ENCODE measurements at regions of chr6 and their contacts with region 1.

Region 1: DNA sequence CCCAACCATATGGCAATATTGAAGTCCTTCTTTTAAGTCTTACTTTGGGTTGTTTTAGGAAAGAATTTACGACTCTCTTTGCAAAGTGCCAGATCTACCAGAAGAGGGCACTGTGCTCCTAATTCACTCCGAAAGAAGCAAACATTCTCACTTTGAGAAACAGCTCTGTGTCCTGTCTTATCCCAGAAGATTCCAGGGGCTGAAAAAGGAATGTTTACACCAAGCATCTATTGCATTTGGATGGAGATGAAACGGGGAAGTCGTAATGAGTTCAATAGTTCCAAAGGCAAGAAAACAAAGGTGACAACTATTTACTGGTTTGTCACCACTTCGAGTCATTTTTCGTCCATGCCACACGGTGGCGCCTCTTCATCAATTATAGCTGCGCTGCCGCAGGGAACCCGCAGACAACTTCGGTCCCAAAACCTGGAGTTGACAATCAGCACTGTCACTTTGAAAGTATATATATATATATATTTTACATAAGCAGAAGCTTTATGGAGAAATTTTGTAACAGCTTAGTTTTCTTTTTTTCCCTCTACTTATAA is 121.6 kb downstream of the MOXD1 start:
- DNase-seq: peak; percentile 43 to 83 (median 60)
- ATAC-seq: peak; percentile 87
- H3K4me3 ChIP-seq: peak overlapping the region; percentile 47
- H3K4me3 Mint-ChIP-seq: peak overlapping the region; percentile 80
- H3K27ac ChIP-seq: no peak overlapping the region
- H3K27ac Mint-ChIP-seq: no peak overlapping the region
- H3K4me1 ChIP-seq: no peaks in the 10 kb centered on the region
- H3K4me1 Mint-ChIP-seq: no peaks in the 10 kb centered on the region
- H3K27me3 ChIP-seq: peaks cover 3 to 20% of the 10 kb centered on the region in 2 experiments
- H3K27me3 Mint-ChIP-seq: peaks cover 32% of the 10 kb centered on the region
- CTCF ChIP-seq: peak; percentile 100

Region 2: GRCh38 chr6:132259070-132259469 is 20.6 kb before region 1 on chr6:
- CTCF ChIA-PET with region 1: interaction called, 10 read pairs
- POLR2A ChIA-PET with region 1: interaction called, 3 read pairs
- intact Hi-C with region 1: no loop called
- DNase-seq: no peak
- ATAC-seq: no peak
- H3K4me3 ChIP-seq: no peak overlapping the region
- H3K4me3 Mint-ChIP-seq: no peak overlapping the region
- H3K27ac ChIP-seq: no peak overlapping the region
- H3K27ac Mint-ChIP-seq: no peak overlapping the region
- H3K4me1 ChIP-seq: no peaks in the 10 kb centered on the region
- H3K4me1 Mint-ChIP-seq: no peaks in the 10 kb centered on the region
- H3K27me3 ChIP-seq: peaks cover 2 to 15% of the 10 kb centered on the region in 2 experiments
- H3K27me3 Mint-ChIP-seq: peaks cover 34% of the 10 kb centered on the region
- CTCF ChIP-seq: no peak

Region 3: DNA sequence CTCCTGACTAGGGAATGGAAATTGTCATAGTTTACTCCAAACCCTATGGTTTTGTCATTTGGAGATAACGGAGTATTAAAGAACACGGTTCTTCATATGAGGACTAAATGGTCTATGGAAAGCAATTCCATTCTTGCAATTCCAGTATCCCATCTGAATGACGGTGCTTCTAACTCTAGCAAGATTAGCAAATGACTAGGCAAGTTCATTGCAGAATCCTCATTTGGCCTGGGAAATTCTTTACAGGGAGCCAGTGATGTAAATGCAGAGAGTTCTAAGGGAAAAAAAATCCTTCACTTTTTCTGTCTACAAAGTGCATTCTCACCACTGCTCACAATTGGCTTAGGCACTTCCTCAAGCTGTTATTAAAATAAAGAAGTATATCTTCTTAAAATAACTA is 10.1 kb after region 1 on chr6:
- CTCF ChIA-PET with region 1: interaction called, 33 read pairs
- POLR2A ChIA-PET with region 1: no interaction called
- intact Hi-C with region 1: no loop called
- DNase-seq: no peak
- ATAC-seq: no peak
- H3K4me3 ChIP-seq: no peak overlapping the region
- H3K4me3 Mint-ChIP-seq: no peak overlapping the region
- H3K27ac ChIP-seq: no peak overlapping the region
- H3K27ac Mint-ChIP-seq: no peak overlapping the region
- H3K4me1 ChIP-seq: no peaks in the 10 kb centered on the region
- H3K4me1 Mint-ChIP-seq: no peaks in the 10 kb centered on the region
- H3K27me3 ChIP-seq: peaks cover 0 to 3% of the 10 kb centered on the region in 2 experiments
- H3K27me3 Mint-ChIP-seq: peaks cover 8% of the 10 kb centered on the region
- CTCF ChIP-seq: no peak

Region 4: DNA sequence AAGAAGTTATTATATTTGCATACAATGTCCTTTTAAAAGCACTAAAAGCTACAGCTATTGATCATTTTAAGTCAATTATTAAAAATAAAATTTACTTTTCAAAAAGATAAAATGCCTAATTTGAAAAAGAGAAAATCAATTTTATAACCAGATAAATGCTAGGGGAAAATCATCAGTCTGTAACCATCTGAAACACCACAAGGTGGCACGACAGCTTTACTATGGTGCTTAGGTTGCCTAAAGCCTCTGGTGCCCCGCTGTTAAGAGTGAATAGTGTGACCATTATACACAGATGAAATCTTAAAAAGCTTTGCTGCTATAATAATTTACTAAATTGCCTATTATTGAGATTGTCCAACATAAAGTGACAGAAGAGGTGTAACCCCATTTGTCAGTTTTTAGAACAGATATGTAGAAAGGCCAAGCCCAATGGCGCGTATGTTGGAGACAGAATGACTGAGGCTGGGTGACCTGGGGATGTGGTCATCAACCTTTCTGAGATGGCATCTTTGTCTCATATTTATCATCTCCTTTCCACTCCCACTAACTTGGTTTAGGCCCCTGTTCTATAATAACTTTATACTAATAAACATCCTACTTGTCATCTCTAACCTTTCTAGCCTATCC is 20.8 kb after region 1 on chr6:
- CTCF ChIA-PET with region 1: interaction called, 9 read pairs
- POLR2A ChIA-PET with region 1: no interaction called
- intact Hi-C with region 1: loop called in 1 of 2 experiments (anchors 2 kb)
- DNase-seq: peak in 3 of 14 experiments; percentile 14 to 29 (median 25)
- ATAC-seq: no peak
- H3K4me3 ChIP-seq: no peak overlapping the region
- H3K4me3 Mint-ChIP-seq: no peak overlapping the region
- H3K27ac ChIP-seq: no peak overlapping the region
- H3K27ac Mint-ChIP-seq: no peak overlapping the region
- H3K4me1 ChIP-seq: no peaks in the 10 kb centered on the region
- H3K4me1 Mint-ChIP-seq: no peaks in the 10 kb centered on the region
- H3K27me3 ChIP-seq: peaks cover 0 to 11% of the 10 kb centered on the region in 2 experiments
- H3K27me3 Mint-ChIP-seq: peaks cover 31% of the 10 kb centered on the region
- CTCF ChIP-seq: no peak

Region 5: GRCh38 chr6:132483779-132484679 is 204.4 kb after region 1 on chr6:
- CTCF ChIA-PET with region 1: interaction called, 63 read pairs
- POLR2A ChIA-PET with region 1: interaction called, 5 read pairs
- intact Hi-C with region 1: loop called (anchors 1 to 2 kb)
- DNase-seq: peak in 11 of 14 experiments; percentile 3 to 80 (median 20)
- ATAC-seq: peak; percentile 67
- H3K4me3 ChIP-seq: no peak overlapping the region
- H3K4me3 Mint-ChIP-seq: no peak overlapping the region
- H3K27ac ChIP-seq: no peak overlapping the region
- H3K27ac Mint-ChIP-seq: no peak overlapping the region
- H3K4me1 ChIP-seq: no peaks in the 10 kb centered on the region
- H3K4me1 Mint-ChIP-seq: peaks cover 26% of the 10 kb centered on the region
- H3K27me3 ChIP-seq: no peaks in the 10 kb centered on the region
- H3K27me3 Mint-ChIP-seq: no peaks in the 10 kb centered on the region
- CTCF ChIP-seq: peak; percentile 90

Region 6: DNA sequence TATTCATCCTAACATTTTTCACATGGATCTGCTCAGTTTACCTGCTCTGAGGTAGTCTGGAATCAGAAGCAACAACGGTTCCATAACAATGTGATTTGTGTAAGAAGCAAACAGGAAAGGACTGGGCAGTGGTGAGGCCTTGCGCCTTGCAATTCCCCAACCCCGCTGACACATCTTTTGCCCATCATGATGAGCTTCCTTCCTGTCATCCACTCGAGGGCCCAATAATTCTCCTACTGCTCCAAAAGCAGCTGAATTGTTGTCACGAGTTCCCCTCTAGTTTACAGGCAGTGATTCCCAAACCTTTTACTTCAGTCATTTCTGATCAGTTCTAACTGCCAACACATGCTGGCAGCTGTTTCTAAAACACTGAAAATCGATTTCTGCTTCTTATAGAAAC is 210.4 kb after region 1 on chr6:
- CTCF ChIA-PET with region 1: interaction called, 63 read pairs
- POLR2A ChIA-PET with region 1: interaction called, 3 read pairs
- intact Hi-C with region 1: no loop called
- DNase-seq: peak in 2 of 14 experiments; percentile 28 to 42
- ATAC-seq: no peak
- H3K4me3 ChIP-seq: no peak overlapping the region
- H3K4me3 Mint-ChIP-seq: no peak overlapping the region
- H3K27ac ChIP-seq: no peak overlapping the region
- H3K27ac Mint-ChIP-seq: no peak overlapping the region
- H3K4me1 ChIP-seq: peaks cover 9% of the 10 kb centered on the region
- H3K4me1 Mint-ChIP-seq: peaks cover 26% of the 10 kb centered on the region
- H3K27me3 ChIP-seq: no peaks in the 10 kb centered on the region
- H3K27me3 Mint-ChIP-seq: no peaks in the 10 kb centered on the region
- CTCF ChIP-seq: no peak